Posterior vena cava (tissue), 2 donors: ENCODE measurements at regions of chr12 and their contacts with region 1.

Region 1: DNA sequence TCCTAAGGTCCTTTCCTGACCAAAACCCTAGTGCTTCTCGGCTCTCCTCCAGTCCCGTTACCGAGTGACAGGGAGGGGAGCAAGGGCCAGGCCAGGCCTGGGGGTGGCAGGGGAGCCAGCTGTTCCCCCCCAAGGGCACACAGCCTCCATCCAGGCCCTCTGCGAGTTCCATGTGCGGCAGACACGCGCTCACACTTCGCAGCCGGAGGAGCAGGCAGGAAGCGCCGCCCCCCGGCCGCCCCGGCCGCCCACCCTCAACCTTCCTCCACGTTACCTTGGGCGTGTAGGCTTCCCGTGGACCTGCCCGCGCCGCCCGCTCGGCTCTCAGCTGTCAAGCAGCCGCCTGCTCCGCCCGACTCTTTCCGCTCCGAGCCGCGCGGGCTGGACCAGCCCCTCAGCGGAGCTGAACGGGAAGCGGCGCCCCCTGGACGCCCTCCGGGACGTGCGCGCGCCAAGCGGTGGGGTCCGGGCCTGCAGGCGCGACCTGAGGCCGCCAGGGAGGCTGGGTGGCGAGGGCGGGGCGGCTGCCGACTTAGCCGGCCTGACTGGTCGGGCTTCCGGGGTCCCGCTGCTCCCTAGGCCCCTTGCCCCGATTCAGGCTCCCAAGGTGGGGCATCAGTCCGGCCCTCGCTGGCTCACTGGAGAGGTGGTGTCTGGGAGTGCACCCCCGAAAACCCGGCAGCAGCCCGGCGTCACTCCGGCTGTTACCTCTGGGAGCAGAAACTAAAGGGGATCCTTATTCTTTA is at the start of gene CRACR2A:
- DNase-seq: peak; percentile 91
- total RNA-seq, gene CRACR2A: 3.7 to 5.1 TPM

Region 2: DNA sequence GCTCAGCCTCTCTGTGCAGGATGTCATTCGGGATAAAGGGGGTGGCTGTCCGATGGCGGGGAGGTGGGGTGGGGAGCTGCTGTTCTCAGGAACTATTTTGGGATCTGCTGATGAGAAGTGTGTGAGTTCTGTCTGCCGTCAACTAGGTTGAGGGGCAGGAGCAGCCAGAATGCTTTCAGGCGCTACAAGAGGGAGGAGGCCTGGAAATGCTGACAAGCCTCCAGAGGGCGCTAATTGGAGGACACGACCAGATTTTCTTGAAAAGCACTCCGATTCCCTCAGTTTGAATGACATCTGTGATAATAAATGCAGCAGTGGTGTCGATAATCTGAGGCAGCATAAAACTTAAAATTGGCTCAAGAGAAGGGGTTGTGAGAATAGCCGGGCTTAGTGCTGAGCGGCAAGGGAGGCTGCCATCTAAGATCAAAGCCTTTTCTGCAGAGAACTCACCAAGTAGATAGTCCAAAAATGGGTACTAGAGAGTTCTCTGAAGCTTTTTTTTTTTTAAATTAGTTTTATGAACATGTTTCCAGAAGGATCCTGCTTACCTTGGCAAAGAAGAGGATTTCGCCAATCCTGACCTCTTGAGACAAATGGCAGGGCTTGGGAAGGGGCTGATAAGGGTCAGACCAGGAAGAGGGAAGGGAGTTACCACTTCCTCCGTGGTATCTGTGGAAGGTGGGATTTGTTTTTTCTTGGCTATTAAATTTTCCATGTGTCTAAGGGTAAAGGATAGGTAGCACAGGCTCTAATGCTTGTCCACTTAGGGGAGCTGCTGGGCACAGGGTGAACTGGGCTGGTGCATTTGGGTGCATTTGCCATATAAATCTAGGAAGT is 94.4 kb before region 1 on chr12:
- intact Hi-C with region 1: loop called in 1 of 2 experiments (anchors 10 kb)
- DNase-seq: no peak

Region 3: DNA sequence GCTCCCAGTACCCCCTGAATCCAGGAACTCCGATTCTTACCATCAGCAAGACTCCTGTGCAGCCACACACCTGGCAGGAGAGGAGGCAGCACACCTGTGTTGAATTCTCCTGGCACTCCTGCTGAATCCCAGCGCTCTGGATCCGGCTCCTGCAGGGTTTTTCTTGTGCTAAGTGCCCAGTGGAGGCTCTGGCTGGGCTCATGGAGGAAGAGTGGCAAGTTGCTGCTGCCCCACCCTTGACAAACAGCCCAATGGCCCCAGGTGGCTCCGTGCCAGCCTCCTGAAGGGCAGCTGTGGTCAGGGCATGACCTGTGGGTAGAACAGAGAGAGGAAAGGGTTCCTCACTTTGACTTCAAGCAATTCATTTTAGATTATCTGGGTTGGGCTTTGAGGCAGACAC is 20.0 kb before region 1 on chr12:
- intact Hi-C with region 1: no loop called
- DNase-seq: no peak